ENCODE measurements at regions of chr13 and their contacts with region 1.

Region 1: DNA sequence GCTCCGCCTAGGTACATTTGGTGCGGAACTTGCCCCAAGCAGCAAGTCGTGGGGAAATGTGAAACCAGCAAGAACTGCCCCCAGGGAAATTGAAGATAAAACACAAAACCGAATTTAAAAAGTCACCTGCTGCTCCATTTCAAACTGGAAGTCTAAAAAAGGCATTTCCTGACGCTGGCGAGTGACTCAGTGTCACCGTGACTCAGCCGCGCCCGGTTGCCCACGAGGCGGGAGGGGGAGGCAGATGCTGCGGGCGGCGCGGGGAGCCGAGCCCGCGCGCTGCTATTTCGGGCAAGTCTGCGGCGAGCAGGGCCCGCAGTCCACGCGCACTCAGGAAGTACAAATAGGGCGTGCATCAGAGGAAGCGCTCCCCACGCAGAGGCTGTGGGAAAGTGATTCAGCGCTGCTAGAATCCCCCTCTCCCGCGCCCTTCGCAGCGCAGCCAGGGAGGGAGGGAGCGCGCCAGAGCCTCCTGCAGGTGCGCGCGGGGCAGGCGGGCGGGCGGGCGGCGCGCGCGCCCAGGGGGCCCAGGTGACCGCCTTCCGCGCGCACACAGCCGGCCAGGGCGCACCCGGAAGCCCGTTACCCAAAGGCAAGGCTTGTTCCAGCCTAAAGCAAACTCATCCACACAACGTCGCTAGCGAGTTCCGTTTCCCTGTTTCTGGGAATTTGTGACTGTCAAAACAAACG is 168.8 kb downstream of the COL4A1 start:
- DNase-seq: peak; percentile 60
- CTCF ChIP-seq: no peak

Region 2: GRCh38 chr13:109412283-109412901 is 725.8 kb before region 1 on chr13:
- CTCF ChIA-PET with region 1: no interaction called
- POLR2A ChIA-PET with region 1: no interaction called
- DNase-seq: no peak
- CTCF ChIP-seq: no peak

Region 3: DNA sequence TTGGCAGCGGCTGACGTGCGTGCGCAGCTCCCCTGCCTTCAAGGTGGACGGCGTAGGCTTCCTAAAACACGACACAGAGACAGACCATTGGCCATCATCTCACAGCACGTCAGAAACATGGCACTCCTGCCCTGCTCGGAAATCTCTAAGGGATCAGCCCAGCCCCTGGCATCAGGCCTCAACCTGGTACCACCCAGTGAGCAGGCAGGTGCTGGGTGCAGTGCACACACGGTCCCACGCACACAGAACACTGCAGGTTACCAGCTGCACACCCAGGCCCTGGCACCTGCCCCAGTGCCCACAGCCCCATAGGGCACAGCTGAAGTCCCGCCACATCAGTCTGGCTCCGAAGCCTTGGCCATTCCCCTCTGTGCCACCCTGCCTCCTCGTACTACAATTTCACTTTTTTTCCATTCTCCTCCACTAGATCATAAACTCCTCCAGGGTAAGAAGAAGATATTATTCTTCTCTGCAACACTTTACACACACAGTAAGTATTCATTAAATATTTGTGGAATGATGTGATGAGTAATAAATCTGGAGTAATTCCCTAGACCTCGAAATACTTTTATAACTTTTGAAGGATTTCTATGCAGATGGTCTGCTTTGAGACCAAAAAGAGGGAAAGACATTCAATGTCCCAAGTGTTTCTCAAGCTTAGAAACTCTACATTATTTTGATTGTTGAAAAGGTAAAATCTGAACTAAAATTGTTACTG is 12.4 kb after region 1 on chr13:
- CTCF ChIA-PET with region 1: interaction called, 10 read pairs
- POLR2A ChIA-PET with region 1: no interaction called
- DNase-seq: no peak
- CTCF ChIP-seq: no peak

Region 4: GRCh38 chr13:110197046-110197445 is 58.9 kb after region 1 on chr13:
- CTCF ChIA-PET with region 1: no interaction called
- POLR2A ChIA-PET with region 1: no interaction called
- DNase-seq: no peak
- CTCF ChIP-seq: no peak

Region 5: GRCh38 chr13:111166882-111167675 is 1028.9 kb after region 1 on chr13:
- CTCF ChIA-PET with region 1: no interaction called
- POLR2A ChIA-PET with region 1: no interaction called
- DNase-seq: no peak
- CTCF ChIP-seq: no peak